Activated naive CD4-positive, alpha-beta T cell treated with anti-CD3 and anti-CD28 coated beads, Interleukin-2, amount 10 ng/mL, durations not matched to agents 7 days and 5 days (primary cell): ENCODE measurements at regions of chr17 and their contacts with region 1.

Region 1: DNA sequence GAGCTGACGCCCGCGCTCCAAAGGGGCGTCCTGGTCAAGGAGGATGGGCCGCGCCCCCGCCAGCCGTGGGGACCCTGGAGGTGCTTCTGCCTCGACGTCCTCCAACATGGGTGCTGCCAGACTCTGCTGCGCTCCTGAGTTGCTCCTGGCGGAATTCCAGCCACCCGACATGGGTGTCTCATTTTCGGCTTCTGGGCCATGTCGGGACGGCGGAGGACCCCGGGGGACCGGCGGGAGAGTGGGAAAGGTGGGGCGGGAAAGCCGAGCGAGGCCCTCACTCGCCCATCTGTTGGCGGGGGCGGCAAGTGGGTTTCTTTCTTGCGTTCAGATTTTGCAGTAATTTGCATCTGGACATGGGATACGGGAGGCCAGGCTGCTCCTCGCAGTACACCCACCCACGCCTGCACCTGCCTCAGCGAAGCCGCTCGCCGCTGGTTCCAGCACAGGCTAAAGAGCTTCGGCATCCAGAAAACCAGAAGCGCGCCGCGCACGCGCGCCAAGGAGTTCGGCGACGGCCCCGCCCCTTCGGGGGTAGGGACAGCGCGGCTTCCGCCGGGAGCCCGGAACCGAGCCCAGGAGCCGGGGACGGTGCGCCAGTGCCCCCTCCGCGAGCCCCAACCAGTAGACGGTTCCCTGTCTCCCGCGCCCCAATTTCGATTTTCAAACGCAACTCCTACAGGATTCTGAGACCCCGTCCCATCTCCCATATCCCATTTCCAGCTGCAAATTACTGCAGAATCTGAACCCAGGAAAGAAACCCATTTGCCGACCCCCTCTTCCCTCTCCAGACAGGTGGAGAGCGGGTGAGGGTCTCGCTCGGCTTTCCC is at the start of gene ARMC7:
- DNase-seq: peak; percentile 94
- H3K4me3 Mint-ChIP-seq: peak within 1 kb of the TSS; percentile 93
- H3K27ac Mint-ChIP-seq: peak within 1 kb of the TSS; percentile 80
- H3K4me1 Mint-ChIP-seq: peaks cover 49% of the 10 kb centered on the region
- H3K27me3 Mint-ChIP-seq: peaks cover 12% of the 10 kb centered on the region

Region 2: GRCh38 chr17:75059369-75060345 is 50.0 kb before region 1 on chr17:
- CTCF ChIA-PET with region 1: interaction called, 12 read pairs
- DNase-seq: no peak
- H3K4me3 Mint-ChIP-seq: no peak overlapping the region
- H3K27ac Mint-ChIP-seq: peak overlapping the region; percentile 66
- H3K4me1 Mint-ChIP-seq: peaks cover 32% of the 10 kb centered on the region
- H3K27me3 Mint-ChIP-seq: no peaks in the 10 kb centered on the region

Region 3: GRCh38 chr17:75087558-75088453 is 21.8 kb before region 1 on chr17 and contains the start of gene SLC16A5:
- CTCF ChIA-PET with region 1: interaction called, 10 read pairs
- DNase-seq: peak; percentile 76
- H3K4me3 Mint-ChIP-seq: peak within 1 kb of the TSS; percentile 77
- H3K27ac Mint-ChIP-seq: peak within 1 kb of the TSS; percentile 81
- H3K4me1 Mint-ChIP-seq: peaks cover 54% of the 10 kb centered on the region
- H3K27me3 Mint-ChIP-seq: peaks cover under 1% of the 10 kb centered on the region

Region 4: GRCh38 chr17:75144816-75145512 is 35.3 kb after region 1 on chr17:
- CTCF ChIA-PET with region 1: interaction called, 11 read pairs
- DNase-seq: no peak
- H3K4me3 Mint-ChIP-seq: no peak overlapping the region
- H3K27ac Mint-ChIP-seq: peak overlapping the region; percentile 7
- H3K4me1 Mint-ChIP-seq: peaks cover 41% of the 10 kb centered on the region
- H3K27me3 Mint-ChIP-seq: no peaks in the 10 kb centered on the region

Region 5: DNA sequence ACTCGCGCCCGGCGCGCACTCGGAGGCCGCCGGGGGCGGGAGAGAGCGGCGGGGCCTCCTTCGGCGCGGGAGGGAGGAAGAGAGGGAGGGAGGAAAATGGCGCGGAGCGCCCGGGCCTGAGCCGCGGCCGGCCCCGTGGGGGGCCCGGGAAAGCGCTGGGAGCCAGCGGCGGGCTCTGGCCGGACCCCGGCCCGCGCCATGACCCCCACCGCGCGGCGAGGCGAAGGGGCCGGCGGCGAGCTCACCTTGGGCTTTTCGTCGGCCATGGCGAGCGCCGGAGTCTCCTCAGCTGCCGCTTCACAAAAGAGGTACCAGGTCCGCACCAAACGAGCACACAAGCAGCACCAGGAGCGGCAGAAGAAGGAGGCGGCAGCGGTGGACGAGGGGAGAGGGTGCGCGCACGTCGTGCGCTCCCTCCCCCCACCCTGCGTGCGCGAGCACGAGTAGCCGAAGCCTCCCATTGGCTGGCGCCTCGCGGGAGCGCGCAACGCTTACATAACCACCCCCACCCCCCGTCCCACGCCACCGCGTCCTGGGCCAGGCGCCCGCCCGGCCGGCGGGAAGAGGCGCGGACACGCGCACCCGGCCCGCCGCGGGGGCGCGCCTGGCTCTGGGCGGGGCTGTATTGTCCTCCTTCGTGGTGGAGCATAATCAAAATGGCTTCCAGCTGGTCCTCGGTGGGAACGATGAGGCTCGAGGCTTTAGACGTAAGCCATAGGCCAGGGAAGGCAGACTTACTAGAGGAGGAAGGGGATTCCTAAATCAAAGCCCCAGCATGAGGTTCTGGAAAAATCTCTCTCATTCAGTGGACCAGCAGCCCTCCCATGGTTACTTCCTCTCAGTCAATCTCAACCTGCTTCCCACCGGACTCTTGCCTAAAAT is 73.2 kb after region 1 on chr17 and contains the start of gene SUMO2:
- CTCF ChIA-PET with region 1: interaction called, 16 read pairs
- DNase-seq: peak; percentile 95
- H3K4me3 Mint-ChIP-seq: peak within 1 kb of the TSS; percentile 94
- H3K27ac Mint-ChIP-seq: peak within 1 kb of the TSS; percentile 100
- H3K4me1 Mint-ChIP-seq: peaks cover 44% of the 10 kb centered on the region
- H3K27me3 Mint-ChIP-seq: no peaks in the 10 kb centered on the region

Region 6: GRCh38 chr17:75205037-75205792 is 95.6 kb after region 1 on chr17 and contains the start of gene NUP85:
- CTCF ChIA-PET with region 1: interaction called, 107 read pairs
- DNase-seq: peak; percentile 94
- H3K4me3 Mint-ChIP-seq: peak within 1 kb of the TSS; percentile 95
- H3K27ac Mint-ChIP-seq: peak within 1 kb of the TSS; percentile 99
- H3K4me1 Mint-ChIP-seq: peaks cover 40% of the 10 kb centered on the region
- H3K27me3 Mint-ChIP-seq: no peaks in the 10 kb centered on the region

Region 7: DNA sequence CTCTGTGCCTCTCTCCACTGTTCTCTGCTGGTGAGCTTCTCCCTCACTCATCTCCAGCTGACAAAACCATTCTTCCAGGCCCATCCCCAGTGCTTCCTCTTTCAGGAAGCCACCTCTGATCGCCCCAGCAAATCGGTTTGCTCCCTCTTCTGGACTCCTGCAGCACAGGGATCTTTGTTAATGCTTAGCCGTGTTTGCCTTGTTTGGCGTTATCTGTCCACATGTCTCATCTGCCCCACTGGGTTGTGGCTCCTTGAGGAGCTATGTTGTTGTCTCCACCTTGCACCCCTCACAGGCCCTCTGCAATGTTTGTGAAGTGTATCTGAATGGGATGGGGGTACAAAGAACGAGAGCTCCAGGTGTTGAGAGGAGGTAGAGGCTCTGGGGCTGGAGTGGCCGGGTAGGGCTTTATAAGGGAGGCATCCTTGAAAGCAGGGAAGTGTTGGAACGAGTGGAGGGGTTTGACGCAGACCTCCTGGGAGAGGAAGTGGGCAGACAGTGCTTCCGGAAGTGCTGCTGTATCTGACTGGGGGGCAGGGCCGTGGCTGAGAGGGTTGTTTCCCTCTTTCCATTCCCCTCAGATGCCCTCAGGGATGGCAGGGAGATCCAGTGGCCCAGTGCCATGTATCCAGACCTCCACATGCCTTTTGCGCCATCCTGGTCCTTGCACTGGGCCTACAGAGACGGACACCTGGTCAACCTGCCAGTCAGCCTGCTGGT is 377.9 kb after region 1 on chr17:
- CTCF ChIA-PET with region 1: no interaction called
- DNase-seq: peak; percentile 75
- H3K4me3 Mint-ChIP-seq: peak overlapping the region; percentile 19
- H3K27ac Mint-ChIP-seq: peak overlapping the region; percentile 93
- H3K4me1 Mint-ChIP-seq: peaks cover 29% of the 10 kb centered on the region
- H3K27me3 Mint-ChIP-seq: no peaks in the 10 kb centered on the region